Heart left ventricle (tissue), 16 donors: ENCODE measurements at regions of chr13 and their contacts with region 1.

Region 1: GRCh38 chr13:53151336-53152056 is 122.9 kb downstream of the OLFM4 start:
- DNase-seq: peak in 1 of 5 donors; percentile 33
- ATAC-seq: peak in 3 of 4 donors; percentile 44 to 63 (median 54)
- H3K4me3 ChIP-seq: no peak overlapping the region
- H3K27ac ChIP-seq: no peak overlapping the region
- H3K4me1 ChIP-seq: no peaks in the 10 kb centered on the region
- H3K27me3 ChIP-seq: peaks cover 0 to 16% (median 0%) of the 10 kb centered on the region in 9 donors
- CTCF ChIP-seq: peak; percentile 45 to 77 (median 68)
- POLR2A ChIP-seq: no peak

Region 2: GRCh38 chr13:52850396-52851136 is 300.9 kb before region 1 on chr13:
- intact Hi-C with region 1: loop called in 2 of 10 experiments (anchors 5 to 10 kb)
- DNase-seq: peak; percentile 71 to 84 (median 78)
- ATAC-seq: peak; percentile 82 to 93 (median 90)
- H3K4me3 ChIP-seq: peak overlapping the region; percentile 35 to 81 (median 66)
- H3K27ac ChIP-seq: peak overlapping the region in 8 of 12 donors; percentile 16 to 69 (median 52)
- H3K4me1 ChIP-seq: peaks cover 0 to 46% (median 21%) of the 10 kb centered on the region in 12 donors
- H3K27me3 ChIP-seq: peaks cover 35 to 85% (median 50%) of the 10 kb centered on the region in 9 donors
- CTCF ChIP-seq: peak in 2 of 12 donors; percentile 6 to 7
- POLR2A ChIP-seq: no peak

Region 3: GRCh38 chr13:52968074-52968700 is 183.3 kb before region 1 on chr13:
- intact Hi-C with region 1: loop called in 6 of 10 experiments (anchors 5 to 10 kb)
- DNase-seq: peak; percentile 61 to 76 (median 73)
- ATAC-seq: peak; percentile 82 to 91 (median 84)
- H3K4me3 ChIP-seq: no peak overlapping the region
- H3K27ac ChIP-seq: no peak overlapping the region
- H3K4me1 ChIP-seq: peaks cover 0 to 4% (median 0%) of the 10 kb centered on the region in 12 donors
- H3K27me3 ChIP-seq: peaks cover 0 to 19% (median 0%) of the 10 kb centered on the region in 9 donors
- CTCF ChIP-seq: peak; percentile 66 to 94 (median 84)
- POLR2A ChIP-seq: no peak

Region 4: DNA sequence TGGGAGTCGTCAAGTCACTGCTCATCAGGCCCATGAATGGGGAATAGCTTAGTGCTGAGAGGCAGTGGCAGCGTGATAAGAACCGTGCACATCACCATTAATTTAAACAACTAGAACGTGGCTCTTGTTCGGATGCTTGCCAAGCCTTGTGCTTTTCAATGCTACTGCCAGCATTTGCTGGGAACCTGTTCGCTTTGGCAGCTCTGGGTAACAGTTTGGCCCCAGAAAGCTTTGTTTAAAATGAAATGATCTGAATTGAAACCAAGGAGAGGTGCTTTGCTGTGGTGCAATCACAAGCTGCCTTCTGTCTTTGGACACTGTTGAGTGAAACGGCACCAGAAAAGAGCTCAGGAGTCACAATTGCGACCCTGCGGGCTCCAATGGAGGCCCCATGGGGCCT is 176.3 kb before region 1 on chr13:
- intact Hi-C with region 1: loop called in 2 of 10 experiments (anchors 10 kb)
- DNase-seq: no peak
- ATAC-seq: no peak
- H3K4me3 ChIP-seq: no peak overlapping the region
- H3K27ac ChIP-seq: no peak overlapping the region
- H3K4me1 ChIP-seq: no peaks in the 10 kb centered on the region
- H3K27me3 ChIP-seq: peaks cover 0 to 16% (median 0%) of the 10 kb centered on the region in 9 donors
- CTCF ChIP-seq: no peak
- POLR2A ChIP-seq: no peak

Region 5: DNA sequence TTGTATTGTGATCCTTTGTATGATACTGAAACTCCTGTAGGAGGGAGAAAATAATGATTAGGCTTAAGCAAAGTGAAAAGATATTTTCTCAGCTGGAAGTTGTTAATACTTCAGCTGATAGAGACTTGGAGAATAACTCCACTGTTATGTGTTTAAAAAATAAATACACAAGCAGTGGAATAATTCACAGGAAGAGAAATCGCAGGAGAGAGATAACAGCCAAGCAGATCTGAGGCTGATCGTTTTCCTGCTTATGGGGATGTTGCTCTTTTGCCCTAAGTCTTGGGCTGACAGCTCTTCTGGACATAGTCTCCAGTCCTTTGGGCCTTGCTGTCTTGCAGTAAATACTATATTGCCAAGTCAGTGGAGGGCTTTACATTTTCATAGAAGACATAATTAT is 29.6 kb before region 1 on chr13:
- intact Hi-C with region 1: no loop called
- DNase-seq: no peak
- ATAC-seq: no peak
- H3K4me3 ChIP-seq: no peak overlapping the region
- H3K27ac ChIP-seq: no peak overlapping the region
- H3K4me1 ChIP-seq: no peaks in the 10 kb centered on the region
- H3K27me3 ChIP-seq: no peaks in the 10 kb centered on the region
- CTCF ChIP-seq: no peak
- POLR2A ChIP-seq: no peak

Region 6: GRCh38 chr13:53137779-53138178 is 13.7 kb before region 1 on chr13:
- intact Hi-C with region 1: no loop called
- DNase-seq: no peak
- ATAC-seq: peak in 2 of 4 donors; percentile 45 to 72
- H3K4me3 ChIP-seq: no peak overlapping the region
- H3K27ac ChIP-seq: peak overlapping the region in 1 of 12 donors; percentile 22
- H3K4me1 ChIP-seq: no peaks in the 10 kb centered on the region
- H3K27me3 ChIP-seq: peaks cover 0 to 20% (median 0%) of the 10 kb centered on the region in 9 donors
- CTCF ChIP-seq: no peak
- POLR2A ChIP-seq: no peak